ENCODE measurements at regions of chr7 and their contacts with region 1.

Region 1: GRCh38 chr7:116525913-116526861 is 1.4 kb downstream of the CAV1 start:
- DNase-seq: peak; percentile 54
- H3K4me3 Mint-ChIP-seq: peak overlapping the region; percentile 85
- H3K27ac Mint-ChIP-seq: peak overlapping the region; percentile 40
- H3K4me1 Mint-ChIP-seq: peaks cover 39% of the 10 kb centered on the region
- H3K27me3 Mint-ChIP-seq: peaks cover 69% of the 10 kb centered on the region

Region 2: DNA sequence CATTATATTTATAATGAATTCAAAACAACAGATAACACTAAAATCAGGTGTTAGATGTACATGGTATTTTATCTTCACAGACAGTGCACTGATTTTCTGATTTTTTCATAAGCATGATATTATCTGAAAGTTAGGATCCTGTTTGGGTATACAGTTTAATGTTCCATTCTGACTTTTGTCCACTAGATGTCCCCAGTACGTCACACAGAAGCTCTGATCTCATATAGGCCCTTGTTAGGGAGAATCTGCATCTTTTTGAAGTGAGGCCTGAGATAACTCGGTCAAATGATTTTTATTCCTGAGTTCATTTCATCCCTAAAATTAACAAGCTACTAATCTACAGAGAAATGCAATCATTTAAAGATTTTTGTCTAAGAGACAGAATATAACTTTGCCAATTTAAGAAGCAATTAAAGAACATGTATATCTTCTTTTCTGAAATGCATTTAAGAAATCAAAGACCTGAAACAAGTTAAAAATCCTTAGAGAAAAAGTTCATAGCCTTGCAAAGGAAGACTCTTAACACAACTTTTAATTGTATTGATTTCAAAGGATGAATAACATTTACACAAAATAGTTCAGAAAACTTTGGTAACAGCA is 387.9 kb before region 1 on chr7:
- intact Hi-C with region 1: loop called (anchors 2 kb)
- DNase-seq: peak; percentile 16
- H3K4me3 Mint-ChIP-seq: no peak overlapping the region
- H3K27ac Mint-ChIP-seq: no peak overlapping the region
- H3K4me1 Mint-ChIP-seq: peaks cover 20% of the 10 kb centered on the region
- H3K27me3 Mint-ChIP-seq: peaks cover 9% of the 10 kb centered on the region

Region 3: GRCh38 chr7:116180302-116180701 is 345.9 kb before region 1 on chr7:
- intact Hi-C with region 1: loop called (anchors 5 kb)
- DNase-seq: peak; percentile 13
- H3K4me3 Mint-ChIP-seq: no peak overlapping the region
- H3K27ac Mint-ChIP-seq: no peak overlapping the region
- H3K4me1 Mint-ChIP-seq: no peaks in the 10 kb centered on the region
- H3K27me3 Mint-ChIP-seq: peaks cover 2% of the 10 kb centered on the region

Region 4: GRCh38 chr7:116258734-116259133 is 267.5 kb before region 1 on chr7:
- intact Hi-C with region 1: loop called (anchors 1 kb)
- DNase-seq: no peak
- H3K4me3 Mint-ChIP-seq: no peak overlapping the region
- H3K27ac Mint-ChIP-seq: no peak overlapping the region
- H3K4me1 Mint-ChIP-seq: peaks cover 5% of the 10 kb centered on the region
- H3K27me3 Mint-ChIP-seq: no peaks in the 10 kb centered on the region

Region 5: GRCh38 chr7:116493449-116493848 is 32.7 kb before region 1 on chr7:
- intact Hi-C with region 1: loop called (anchors 5 kb)
- DNase-seq: no peak
- H3K4me3 Mint-ChIP-seq: no peak overlapping the region
- H3K27ac Mint-ChIP-seq: no peak overlapping the region
- H3K4me1 Mint-ChIP-seq: no peaks in the 10 kb centered on the region
- H3K27me3 Mint-ChIP-seq: peaks cover 36% of the 10 kb centered on the region

Region 6: DNA sequence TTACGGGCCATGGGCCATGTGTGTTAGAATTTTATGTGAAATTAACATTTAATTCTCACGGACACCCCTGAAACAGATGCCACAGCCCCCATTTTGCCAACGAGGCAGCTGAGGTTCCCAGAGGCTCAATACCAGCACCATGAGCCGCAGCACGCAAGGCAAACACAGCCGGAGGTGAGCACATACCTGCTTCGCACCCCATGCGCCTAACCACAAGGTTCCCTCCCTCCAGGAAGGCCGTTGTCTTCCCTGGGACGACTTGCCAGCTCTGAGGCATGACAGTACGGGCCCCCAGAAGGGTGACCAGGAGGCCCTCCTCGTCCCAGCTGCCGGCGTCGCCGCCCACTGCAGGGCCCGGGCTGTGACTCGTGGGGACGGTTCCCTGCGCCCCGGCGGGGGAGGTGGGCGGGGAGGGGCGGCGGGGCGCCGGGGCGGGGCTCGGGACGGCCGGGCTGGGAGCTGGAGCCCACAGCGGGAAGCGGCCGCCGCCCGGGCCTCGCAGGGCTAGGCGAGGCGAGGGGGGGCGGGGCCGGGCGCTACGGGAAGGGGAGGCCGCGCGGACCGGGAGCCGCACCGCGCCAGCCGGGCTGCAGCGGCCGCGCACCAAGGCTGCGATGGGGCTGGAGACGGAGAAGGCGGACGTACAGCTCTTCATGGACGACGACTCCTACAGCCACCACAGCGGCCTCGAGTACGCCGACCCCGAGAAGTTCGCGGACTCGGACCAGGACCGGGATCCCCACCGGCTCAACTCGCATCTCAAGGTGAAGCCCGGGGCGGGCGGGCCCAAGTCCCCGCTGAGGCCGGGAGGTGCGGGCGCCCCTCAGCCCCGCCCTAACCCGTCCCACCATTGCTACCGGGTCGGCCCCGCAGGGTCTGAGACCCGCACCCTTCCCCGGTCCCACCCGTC is 26.8 kb before region 1 on chr7 and contains the start of gene CAV2:
- intact Hi-C with region 1: loop called (anchors 1 kb)
- DNase-seq: no peak
- H3K4me3 Mint-ChIP-seq: peak within 1 kb of the TSS; percentile 19
- H3K27ac Mint-ChIP-seq: peak within 1 kb of the TSS; percentile 24
- H3K4me1 Mint-ChIP-seq: peaks cover 10% of the 10 kb centered on the region
- H3K27me3 Mint-ChIP-seq: peaks cover 53% of the 10 kb centered on the region
- total RNA-seq, gene CAV2: not detected in 2 replicates

Region 7: DNA sequence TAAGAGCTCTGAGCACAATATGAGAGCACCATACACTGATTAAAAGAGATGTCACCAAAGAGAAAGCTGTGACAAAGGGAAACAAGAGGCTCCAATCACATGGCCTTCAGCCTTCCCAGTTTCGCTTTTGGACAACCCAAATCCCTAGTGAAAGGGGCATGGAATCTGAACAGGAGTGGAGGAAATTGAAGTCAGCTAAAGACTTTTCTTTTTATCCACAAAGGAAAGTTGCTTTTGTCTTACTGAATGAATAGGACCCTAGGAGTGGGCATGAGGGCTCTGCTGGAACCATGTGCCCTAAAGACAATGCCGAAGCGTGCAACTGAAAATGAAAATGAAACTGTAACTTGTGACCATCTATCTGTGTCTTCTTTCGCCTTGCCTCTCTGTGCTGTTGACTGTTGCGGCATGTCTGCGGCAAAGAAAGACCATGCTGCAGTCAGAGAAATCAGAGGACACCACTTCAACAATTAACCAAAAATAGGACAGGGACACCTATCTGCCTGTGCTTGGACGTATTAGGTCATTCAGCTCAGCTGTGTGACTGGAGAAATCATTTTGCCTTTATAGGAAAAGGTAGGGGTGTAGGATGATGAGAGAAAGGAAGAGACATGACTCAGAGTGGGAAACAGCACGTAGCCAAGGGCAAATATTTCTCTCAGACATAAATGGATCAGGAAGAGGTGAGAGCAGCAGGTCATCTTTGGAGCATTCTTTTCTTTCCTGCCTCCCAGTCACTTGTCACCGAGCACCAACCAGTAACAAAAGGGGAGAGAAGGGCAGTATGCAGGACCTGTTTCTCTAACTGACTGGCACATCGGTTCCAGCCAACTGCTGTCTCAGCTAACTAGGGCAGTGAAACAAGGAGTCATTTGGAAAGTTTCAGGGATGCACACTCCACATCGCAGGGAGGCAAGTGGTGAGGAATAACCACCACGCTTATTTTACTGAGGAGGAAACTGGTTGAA is 14.4 kb before region 1 on chr7:
- intact Hi-C with region 1: no loop called
- DNase-seq: no peak
- H3K4me3 Mint-ChIP-seq: peak overlapping the region; percentile 74
- H3K27ac Mint-ChIP-seq: no peak overlapping the region
- H3K4me1 Mint-ChIP-seq: peaks cover 17% of the 10 kb centered on the region
- H3K27me3 Mint-ChIP-seq: peaks cover 30% of the 10 kb centered on the region

Region 8: GRCh38 chr7:116809636-116810266 is 283.6 kb after region 1 on chr7:
- intact Hi-C with region 1: loop called (anchors 2 kb)
- DNase-seq: peak; percentile 3
- H3K4me3 Mint-ChIP-seq: no peak overlapping the region
- H3K27ac Mint-ChIP-seq: no peak overlapping the region
- H3K4me1 Mint-ChIP-seq: no peaks in the 10 kb centered on the region
- H3K27me3 Mint-ChIP-seq: peaks cover 9% of the 10 kb centered on the region